ENCODE measurements at regions of chr10 and their contacts with region 1.

Region 1: DNA sequence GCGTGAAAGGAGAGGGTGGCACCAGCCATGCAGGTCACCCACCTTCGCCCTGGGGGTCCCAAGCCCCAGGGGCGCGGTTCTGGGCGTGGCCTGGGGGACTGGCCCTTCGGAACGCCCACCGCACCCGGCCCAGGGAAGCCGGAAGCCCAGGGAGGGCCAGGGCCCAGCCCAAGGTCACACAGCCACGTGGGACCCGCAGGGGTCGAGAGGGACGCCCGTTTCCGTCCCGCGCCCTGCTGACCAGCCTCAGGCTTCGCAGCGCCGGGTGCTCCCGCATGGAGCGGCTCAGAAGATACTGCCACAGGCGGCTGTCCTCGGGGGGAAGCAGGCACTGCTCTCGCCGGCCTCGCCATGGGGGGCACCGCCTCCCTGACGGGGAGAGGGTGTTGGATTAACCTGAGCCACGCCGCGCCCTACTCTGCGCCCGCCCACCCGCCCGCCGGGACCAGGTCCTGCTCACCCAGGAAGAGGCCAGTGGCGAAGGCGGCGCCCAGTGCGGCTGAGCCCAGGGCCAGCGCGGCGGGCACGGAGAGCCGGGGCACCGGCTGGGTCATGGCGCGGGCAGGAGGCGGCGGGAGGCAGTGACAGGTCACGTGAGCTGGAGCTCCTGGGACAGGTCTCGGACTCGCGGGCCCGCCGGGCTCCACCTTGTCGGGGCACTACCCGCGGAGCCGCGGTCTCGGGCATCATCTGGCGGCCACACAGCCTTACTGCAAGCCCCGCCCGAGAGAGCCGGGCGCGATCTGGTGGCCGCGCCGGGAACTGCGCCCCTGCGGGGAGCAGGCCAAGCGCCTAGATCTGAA is at the start of gene COMTD1:
- DNase-seq: peak; percentile 83
- H3K4me3 ChIP-seq: peak within 1 kb of the TSS; percentile 22 to 60 (median 42)
- H3K27ac ChIP-seq: no peak within 1 kb of the TSS
- H3K4me1 ChIP-seq: peaks cover 11% of the 10 kb centered on the region
- H3K27me3 ChIP-seq: no peaks in the 10 kb centered on the region
- CTCF ChIP-seq: peak; percentile 100
- POLR2A ChIP-seq: no peak
- total RNA-seq, gene COMTD1: 14.0 and 18.6 TPM in 2 replicates

Region 2: DNA sequence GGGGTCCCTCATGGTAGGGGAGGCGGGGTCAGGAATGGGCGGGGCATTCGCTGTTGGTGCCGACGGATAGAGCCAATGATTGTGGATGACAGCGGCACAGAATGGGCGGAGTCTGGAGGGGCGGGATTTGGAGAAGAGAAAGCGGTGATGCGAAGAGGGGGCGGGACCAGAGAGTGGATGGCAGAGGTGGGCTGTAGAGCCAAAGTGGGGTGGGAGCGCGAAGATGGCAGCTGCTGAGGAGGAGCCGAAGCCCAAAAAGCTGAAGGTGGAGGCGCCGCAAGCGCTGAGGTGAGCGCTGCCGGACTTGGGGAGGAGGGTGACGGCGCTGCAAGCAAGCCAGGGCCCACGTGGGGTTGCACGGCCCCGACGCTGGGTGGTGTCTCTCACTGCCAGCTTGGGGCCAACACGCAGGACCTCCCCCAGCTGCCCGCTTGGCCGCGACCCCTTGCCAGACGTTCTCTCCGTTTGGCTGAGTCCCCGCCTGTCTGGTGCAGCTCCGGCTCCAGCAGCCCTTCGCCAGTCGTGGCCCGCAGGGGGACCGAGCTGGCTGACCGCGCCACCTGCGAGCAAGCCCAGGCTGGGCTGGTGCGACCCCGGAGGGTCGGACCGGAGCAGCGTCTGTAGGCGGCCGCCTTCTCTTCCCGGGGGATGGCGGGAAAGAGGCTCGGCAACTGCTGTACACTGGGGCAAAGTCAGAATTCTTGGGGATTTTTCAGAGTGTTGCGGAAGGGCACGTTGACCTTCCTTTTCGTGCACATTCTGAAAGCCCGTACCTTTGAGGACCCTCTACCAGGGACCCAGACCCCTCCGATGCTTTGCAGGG is 1084.3 kb before region 1 on chr10 and contains the start of gene ADK:
- CTCF ChIA-PET with region 1: no interaction called
- POLR2A ChIA-PET with region 1: no interaction called
- dilution Hi-C with region 1: no loop called
- intact Hi-C with region 1: loop called (anchors 5 kb)
- DNase-seq: peak; percentile 99
- H3K4me3 ChIP-seq: peak within 1 kb of the TSS; percentile 82 to 96 (median 87)
- H3K27ac ChIP-seq: peak within 1 kb of the TSS; percentile 93
- H3K4me1 ChIP-seq: peaks cover 13% of the 10 kb centered on the region
- H3K27me3 ChIP-seq: no peaks in the 10 kb centered on the region
- CTCF ChIP-seq: peak in 1 of 2 donors; percentile 18
- POLR2A ChIP-seq: peak; percentile 82
- total RNA-seq, gene ADK: 38.1 and 46.5 TPM in 2 replicates

Region 3: GRCh38 chr10:74262856-74263255 is 972.7 kb before region 1 on chr10:
- CTCF ChIA-PET with region 1: interaction called, 3 read pairs
- POLR2A ChIA-PET with region 1: no interaction called
- dilution Hi-C with region 1: no loop called
- intact Hi-C with region 1: loop called (anchors 1 kb)
- DNase-seq: no peak
- H3K4me3 ChIP-seq: no peak overlapping the region
- H3K27ac ChIP-seq: no peak overlapping the region
- H3K4me1 ChIP-seq: peaks cover 2% of the 10 kb centered on the region
- H3K27me3 ChIP-seq: no peaks in the 10 kb centered on the region
- CTCF ChIP-seq: no peak
- POLR2A ChIP-seq: no peak

Region 4: GRCh38 chr10:75099952-75100763 is 135.4 kb before region 1 on chr10:
- CTCF ChIA-PET with region 1: interaction called, 11 read pairs
- POLR2A ChIA-PET with region 1: no interaction called
- dilution Hi-C with region 1: no loop called
- intact Hi-C with region 1: no loop called
- DNase-seq: peak; percentile 52
- H3K4me3 ChIP-seq: no peak overlapping the region
- H3K27ac ChIP-seq: no peak overlapping the region
- H3K4me1 ChIP-seq: no peaks in the 10 kb centered on the region
- H3K27me3 ChIP-seq: no peaks in the 10 kb centered on the region
- CTCF ChIP-seq: peak; percentile 92 to 98
- POLR2A ChIP-seq: no peak

Region 5: DNA sequence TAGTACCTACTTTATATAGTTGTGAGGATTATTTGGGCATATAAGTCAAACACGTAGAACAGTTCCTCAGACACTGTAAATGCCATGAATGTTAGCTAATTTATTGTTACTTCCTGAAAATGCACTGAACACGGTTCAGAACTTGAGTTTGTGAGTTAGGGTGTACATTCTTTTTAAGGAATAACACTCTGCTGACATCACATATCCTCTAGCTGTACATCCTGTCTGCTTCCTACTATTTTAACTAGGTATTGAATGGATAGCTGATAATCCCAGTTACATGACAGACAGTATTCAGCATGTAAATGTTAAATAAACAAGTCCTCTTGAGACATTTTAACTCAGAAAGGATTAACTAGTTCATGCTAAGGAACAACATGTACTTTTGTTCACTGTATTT is 108.1 kb before region 1 on chr10:
- CTCF ChIA-PET with region 1: interaction called, 14 read pairs
- POLR2A ChIA-PET with region 1: no interaction called
- dilution Hi-C with region 1: no loop called
- intact Hi-C with region 1: no loop called
- DNase-seq: peak; percentile 82
- H3K4me3 ChIP-seq: no peak overlapping the region
- H3K27ac ChIP-seq: peak overlapping the region; percentile 72
- H3K4me1 ChIP-seq: peaks cover 25% of the 10 kb centered on the region
- H3K27me3 ChIP-seq: no peaks in the 10 kb centered on the region
- CTCF ChIP-seq: no peak
- POLR2A ChIP-seq: no peak

Region 6: GRCh38 chr10:75210282-75211006 is 25.1 kb before region 1 on chr10 and contains the start of gene VDAC2:
- CTCF ChIA-PET with region 1: interaction called, 30 read pairs
- POLR2A ChIA-PET with region 1: interaction called, 14 read pairs
- dilution Hi-C with region 1: no loop called
- intact Hi-C with region 1: loop called (anchors 1 kb)
- DNase-seq: peak; percentile 90
- H3K4me3 ChIP-seq: peak within 1 kb of the TSS; percentile 63 to 99 (median 96)
- H3K27ac ChIP-seq: peak within 1 kb of the TSS; percentile 94
- H3K4me1 ChIP-seq: peaks cover 21% of the 10 kb centered on the region
- H3K27me3 ChIP-seq: no peaks in the 10 kb centered on the region
- CTCF ChIP-seq: no peak
- POLR2A ChIP-seq: peak; percentile 91
- total RNA-seq, gene VDAC2: 220 and 222 TPM in 2 replicates

Measured in endothelial cell of umbilical vein (primary cell).